ENCODE measurements at regions of chr19 and their contacts with region 1.

Region 1: DNA sequence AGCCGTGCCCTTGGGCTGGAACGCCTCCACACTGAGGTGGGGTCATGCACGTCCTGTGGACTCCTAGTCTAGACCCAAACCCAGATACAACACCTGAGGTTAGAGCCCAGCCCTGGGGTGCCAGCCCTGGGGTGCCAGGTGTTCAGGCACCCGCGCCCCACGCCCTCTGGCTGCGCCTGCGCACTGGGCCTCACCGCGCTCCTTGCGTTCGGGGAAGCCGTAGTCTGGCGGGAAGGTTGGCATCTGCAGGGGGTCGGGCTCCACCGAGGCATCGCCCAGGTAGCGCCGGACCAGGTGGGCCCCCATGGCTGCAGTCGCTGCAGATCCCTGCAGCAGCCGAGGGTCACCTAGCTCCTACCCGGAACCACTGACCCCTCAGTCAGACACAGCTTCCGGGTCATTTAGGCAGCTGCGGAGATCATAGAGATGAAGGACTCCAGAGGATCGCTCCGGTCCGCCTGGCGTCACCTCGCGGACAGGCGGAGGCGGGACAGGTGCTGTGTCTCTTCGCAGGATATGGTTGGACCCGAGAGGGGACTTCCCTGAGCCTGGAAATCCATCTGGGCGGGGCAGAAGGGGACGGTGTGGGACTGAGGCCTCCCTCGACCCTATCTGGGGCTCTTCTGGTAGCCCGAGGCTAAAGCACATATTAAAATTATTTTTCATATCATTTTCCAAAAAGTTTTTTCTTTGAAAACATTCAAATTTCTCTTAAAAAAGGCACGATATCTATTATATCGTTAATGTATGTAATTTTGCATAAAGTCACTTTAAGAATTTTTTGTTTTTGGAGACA is at the start of gene NDUFB7:
- DNase-seq: peak; percentile 81
- ATAC-seq: peak; percentile 84
- H3K4me3 Mint-ChIP-seq: peak within 1 kb of the TSS; percentile 96
- H3K27ac Mint-ChIP-seq: peak within 1 kb of the TSS; percentile 92
- H3K4me1 Mint-ChIP-seq: peaks cover 57% of the 10 kb centered on the region
- H3K27me3 Mint-ChIP-seq: no peaks in the 10 kb centered on the region
- CTCF ChIP-seq: peak; percentile 65
- total RNA-seq, gene NDUFB7: 108 and 129 TPM in 2 replicates

Region 2: DNA sequence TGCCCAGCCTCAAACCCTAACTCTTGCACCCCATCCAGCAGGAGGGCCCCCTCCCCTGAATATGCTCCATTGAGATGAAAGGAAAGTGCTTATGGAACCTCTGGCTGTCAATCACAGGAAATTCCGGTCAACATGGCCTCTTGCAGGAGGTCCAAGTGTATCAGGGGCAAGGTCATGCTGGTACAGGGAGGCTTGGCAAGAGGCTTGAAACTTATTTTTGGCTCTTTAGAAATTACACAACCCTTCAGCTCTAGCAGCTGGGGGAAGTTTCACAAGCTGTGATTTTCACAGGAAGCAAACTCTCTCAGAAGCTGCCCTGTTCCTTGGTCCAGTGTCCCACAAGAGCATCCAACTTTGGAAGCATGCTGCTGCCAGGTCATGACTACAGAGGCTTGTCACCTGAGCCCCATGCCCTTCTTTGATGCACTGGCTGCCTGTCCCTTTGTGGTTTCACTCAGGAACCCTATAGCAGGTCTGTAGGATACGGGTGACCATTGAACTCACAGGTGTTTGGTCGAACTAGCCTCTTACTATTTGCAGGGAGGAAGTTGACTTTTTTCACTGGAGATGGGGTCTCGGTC is 443.9 kb before region 1 on chr19:
- CTCF ChIA-PET with region 1: no interaction called
- POLR2A ChIA-PET with region 1: no interaction called
- intact Hi-C with region 1: no loop called
- DNase-seq: no peak
- ATAC-seq: no peak
- H3K4me3 Mint-ChIP-seq: no peak overlapping the region
- H3K27ac Mint-ChIP-seq: no peak overlapping the region
- H3K4me1 Mint-ChIP-seq: peaks cover 3% of the 10 kb centered on the region
- H3K27me3 Mint-ChIP-seq: no peaks in the 10 kb centered on the region
- CTCF ChIP-seq: no peak

Region 3: DNA sequence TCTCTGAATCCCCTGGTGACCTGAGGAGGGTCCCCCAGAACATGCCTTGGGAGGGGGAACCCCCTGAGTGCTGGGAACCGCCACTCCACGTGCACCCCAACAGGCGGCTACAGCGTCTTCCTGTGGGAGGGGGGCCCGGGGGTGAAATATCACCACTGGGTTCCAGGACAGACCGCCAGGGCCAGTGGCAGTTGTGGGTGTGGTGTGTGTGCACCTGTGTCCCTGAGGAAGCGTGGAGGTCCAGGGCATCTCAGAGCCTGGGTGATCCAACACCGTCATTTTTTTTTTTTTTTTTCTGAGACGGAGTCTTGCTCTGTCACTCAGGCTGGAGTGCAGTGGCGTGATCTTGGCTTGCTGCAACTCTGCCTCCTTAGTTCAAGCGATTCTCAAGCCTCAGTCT is 186.4 kb before region 1 on chr19:
- CTCF ChIA-PET with region 1: no interaction called
- POLR2A ChIA-PET with region 1: no interaction called
- intact Hi-C with region 1: no loop called
- DNase-seq: no peak
- ATAC-seq: no peak
- H3K4me3 Mint-ChIP-seq: peak overlapping the region; percentile 93
- H3K27ac Mint-ChIP-seq: peak overlapping the region; percentile 93
- H3K4me1 Mint-ChIP-seq: peaks cover 40% of the 10 kb centered on the region
- H3K27me3 Mint-ChIP-seq: no peaks in the 10 kb centered on the region
- CTCF ChIP-seq: no peak

Region 4: GRCh38 chr19:14432791-14433553 is 138.9 kb before region 1 on chr19 and contains the start of gene PKN1:
- CTCF ChIA-PET with region 1: no interaction called
- POLR2A ChIA-PET with region 1: no interaction called
- intact Hi-C with region 1: no loop called
- DNase-seq: peak; percentile 72
- ATAC-seq: peak; percentile 63
- H3K4me3 Mint-ChIP-seq: peak within 1 kb of the TSS; percentile 87
- H3K27ac Mint-ChIP-seq: peak within 1 kb of the TSS; percentile 76
- H3K4me1 Mint-ChIP-seq: peaks cover 30% of the 10 kb centered on the region
- H3K27me3 Mint-ChIP-seq: no peaks in the 10 kb centered on the region
- CTCF ChIP-seq: no peak
- total RNA-seq, gene PKN1: 139 and 159 TPM in 2 replicates

Region 5: GRCh38 chr19:14529254-14530004 is 42.5 kb before region 1 on chr19 and contains the start of gene TECR:
- CTCF ChIA-PET with region 1: no interaction called
- POLR2A ChIA-PET with region 1: no interaction called
- intact Hi-C with region 1: loop called (anchors 1 kb)
- DNase-seq: peak; percentile 99
- ATAC-seq: peak; percentile 96
- H3K4me3 Mint-ChIP-seq: peak within 1 kb of the TSS; percentile 95
- H3K27ac Mint-ChIP-seq: peak within 1 kb of the TSS; percentile 96
- H3K4me1 Mint-ChIP-seq: peaks cover 31% of the 10 kb centered on the region
- H3K27me3 Mint-ChIP-seq: no peaks in the 10 kb centered on the region
- CTCF ChIP-seq: no peak
- total RNA-seq, gene TECR: 55.3 and 58.6 TPM in 2 replicates

Region 6: DNA sequence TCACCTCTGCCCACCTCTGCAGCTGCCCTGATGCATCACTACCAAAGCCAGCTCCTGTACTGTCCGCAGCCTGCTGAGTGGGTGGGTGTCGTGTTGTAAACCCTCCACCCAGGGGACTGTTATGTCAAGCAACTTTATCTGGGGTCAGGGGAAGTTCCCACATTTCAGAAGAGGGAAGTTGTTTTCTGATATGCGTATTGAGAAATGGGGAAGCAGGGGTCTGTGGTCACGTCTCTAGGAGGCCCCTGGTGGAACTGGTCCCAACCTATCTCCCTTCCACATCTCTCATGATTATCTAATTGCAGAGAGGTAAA is 42.2 kb after region 1 on chr19:
- CTCF ChIA-PET with region 1: interaction called, 21 read pairs
- POLR2A ChIA-PET with region 1: interaction called, 23 read pairs
- intact Hi-C with region 1: loop called (anchors 1 kb)
- DNase-seq: no peak
- ATAC-seq: peak; percentile 91
- H3K4me3 Mint-ChIP-seq: peak overlapping the region; percentile 80
- H3K27ac Mint-ChIP-seq: peak overlapping the region; percentile 98
- H3K4me1 Mint-ChIP-seq: peaks cover 61% of the 10 kb centered on the region
- H3K27me3 Mint-ChIP-seq: no peaks in the 10 kb centered on the region
- CTCF ChIP-seq: no peak

Region 7: DNA sequence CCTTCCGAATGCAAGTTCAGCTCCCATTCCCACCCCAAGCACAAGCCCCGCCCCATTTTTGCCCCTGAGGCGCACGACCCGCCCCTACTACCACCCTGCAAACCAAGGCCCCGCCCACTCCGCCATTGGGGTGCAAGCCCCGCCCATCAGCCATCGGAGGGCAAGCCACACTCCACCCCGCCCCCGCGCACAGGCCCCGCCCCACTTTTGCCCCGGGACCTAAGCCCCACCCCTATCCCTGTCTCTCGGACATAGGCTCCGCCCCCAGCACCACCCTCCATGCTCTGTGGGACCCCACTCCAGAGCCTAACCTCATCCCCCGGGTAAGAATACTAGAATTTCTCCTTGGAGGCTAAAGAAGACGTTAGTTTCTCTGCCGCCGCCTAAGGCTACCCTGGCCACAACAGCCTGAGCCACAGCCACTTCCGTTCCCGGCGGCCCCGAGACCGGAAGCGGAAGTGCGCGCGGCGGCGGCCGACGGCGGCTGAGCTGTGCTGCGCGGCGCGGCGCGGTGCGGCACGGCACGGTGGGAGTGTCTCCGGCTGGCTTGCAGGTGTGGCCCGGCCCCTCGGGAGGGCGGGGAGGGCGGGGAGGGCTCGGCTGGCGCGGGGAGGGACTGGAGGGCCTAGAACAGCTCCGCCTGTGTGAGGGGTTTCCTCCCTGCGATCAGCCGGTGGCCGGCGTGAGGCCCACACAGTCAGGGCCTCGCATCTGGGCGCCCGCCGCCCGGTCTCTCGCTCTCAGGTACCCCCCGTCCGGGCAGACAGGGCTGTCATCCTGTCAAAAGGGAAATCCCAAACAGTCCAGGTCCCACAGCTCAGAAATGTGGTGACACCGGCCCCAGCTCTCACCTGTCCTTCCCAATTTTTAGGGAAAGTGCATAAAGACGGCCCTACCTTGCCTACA is 118.0 kb after region 1 on chr19 and contains the start of gene ZNF333:
- CTCF ChIA-PET with region 1: interaction called, 510 read pairs
- POLR2A ChIA-PET with region 1: interaction called, 208 read pairs
- intact Hi-C with region 1: loop called (anchors 1 kb)
- DNase-seq: peak; percentile 93
- ATAC-seq: peak; percentile 88
- H3K4me3 Mint-ChIP-seq: peak within 1 kb of the TSS; percentile 97
- H3K27ac Mint-ChIP-seq: peak within 1 kb of the TSS; percentile 100
- H3K4me1 Mint-ChIP-seq: peaks cover 45% of the 10 kb centered on the region
- H3K27me3 Mint-ChIP-seq: no peaks in the 10 kb centered on the region
- CTCF ChIP-seq: no peak
- total RNA-seq, gene ZNF333: 24.0 and 26.2 TPM in 2 replicates

Region 8: GRCh38 chr19:14890643-14891379 is 318.9 kb after region 1 on chr19:
- CTCF ChIA-PET with region 1: interaction called, 3 read pairs
- POLR2A ChIA-PET with region 1: no interaction called
- intact Hi-C with region 1: loop called (anchors 1 kb)
- DNase-seq: no peak
- ATAC-seq: no peak
- H3K4me3 Mint-ChIP-seq: no peak overlapping the region
- H3K27ac Mint-ChIP-seq: no peak overlapping the region
- H3K4me1 Mint-ChIP-seq: peaks cover 25% of the 10 kb centered on the region
- H3K27me3 Mint-ChIP-seq: peaks cover 24% of the 10 kb centered on the region
- CTCF ChIP-seq: no peak

Region 9: GRCh38 chr19:15154002-15154612 is 582.2 kb after region 1 on chr19:
- CTCF ChIA-PET with region 1: no interaction called
- POLR2A ChIA-PET with region 1: no interaction called
- intact Hi-C with region 1: loop called (anchors 1 kb)
- DNase-seq: no peak
- ATAC-seq: no peak
- H3K4me3 Mint-ChIP-seq: no peak overlapping the region
- H3K27ac Mint-ChIP-seq: no peak overlapping the region
- H3K4me1 Mint-ChIP-seq: no peaks in the 10 kb centered on the region
- H3K27me3 Mint-ChIP-seq: peaks cover 17% of the 10 kb centered on the region
- CTCF ChIP-seq: no peak

Measured in activated B cell treated with CpG ODN at 0.5 μM for 24 hours (primary cell).